Psoas muscle (tissue), 8 donors: ENCODE measurements at regions of chr5 and their contacts with region 1.

Region 1: DNA sequence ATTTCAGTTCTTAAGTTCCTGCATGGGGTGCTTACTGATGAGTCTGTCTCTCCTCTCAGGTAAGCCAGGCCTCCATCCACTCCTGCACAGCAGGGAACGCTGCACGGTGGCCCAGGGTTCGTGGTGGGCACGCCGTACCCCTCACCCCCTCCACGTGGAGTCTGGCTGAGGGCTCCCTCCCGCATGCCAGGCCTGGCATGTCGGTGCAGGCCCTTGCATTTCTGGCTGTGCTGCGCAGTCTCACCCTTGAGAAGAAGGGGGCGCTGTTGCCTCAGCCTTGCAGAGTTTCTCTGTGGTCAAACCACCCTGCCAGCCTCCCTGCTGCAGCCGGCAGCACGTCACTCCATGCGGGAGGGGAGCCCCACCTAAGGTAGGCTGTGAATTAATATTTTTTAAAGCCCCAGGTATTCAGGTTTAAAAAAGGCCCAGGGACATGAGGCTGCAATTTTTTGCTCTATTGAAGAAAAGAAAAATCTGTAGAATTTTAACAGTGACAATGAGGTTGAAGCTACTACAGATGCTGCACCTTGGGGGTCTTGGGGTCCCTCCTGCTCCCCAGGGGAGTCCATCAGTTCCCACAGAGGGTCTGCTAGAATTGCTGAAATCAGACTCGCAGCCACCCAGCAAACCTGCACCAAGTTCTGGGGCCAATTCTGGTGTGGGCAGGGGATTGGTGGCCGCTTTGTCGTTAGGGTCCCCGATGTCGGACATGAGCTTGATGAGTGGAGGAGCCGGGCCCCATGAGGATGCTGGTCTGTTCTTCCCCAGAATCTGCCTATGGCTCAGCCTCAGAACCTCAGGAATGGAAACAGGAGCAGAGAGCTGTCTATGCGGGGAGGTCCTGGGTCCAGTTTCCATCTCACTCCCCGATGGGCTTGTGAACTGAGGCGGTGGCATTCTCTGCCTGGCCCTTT is 52.6 kb downstream of the TENT4A start:
- DNase-seq: peak; percentile 73 to 83
- ATAC-seq: peak; percentile 59 to 83 (median 72)
- H3K4me3 ChIP-seq: peak overlapping the region; percentile 16
- H3K27ac ChIP-seq: peak overlapping the region; percentile 85
- H3K4me1 ChIP-seq: peaks cover 20% of the 10 kb centered on the region
- H3K27me3 ChIP-seq: no peaks in the 10 kb centered on the region
- CTCF ChIP-seq: peak; percentile 73

Region 2: DNA sequence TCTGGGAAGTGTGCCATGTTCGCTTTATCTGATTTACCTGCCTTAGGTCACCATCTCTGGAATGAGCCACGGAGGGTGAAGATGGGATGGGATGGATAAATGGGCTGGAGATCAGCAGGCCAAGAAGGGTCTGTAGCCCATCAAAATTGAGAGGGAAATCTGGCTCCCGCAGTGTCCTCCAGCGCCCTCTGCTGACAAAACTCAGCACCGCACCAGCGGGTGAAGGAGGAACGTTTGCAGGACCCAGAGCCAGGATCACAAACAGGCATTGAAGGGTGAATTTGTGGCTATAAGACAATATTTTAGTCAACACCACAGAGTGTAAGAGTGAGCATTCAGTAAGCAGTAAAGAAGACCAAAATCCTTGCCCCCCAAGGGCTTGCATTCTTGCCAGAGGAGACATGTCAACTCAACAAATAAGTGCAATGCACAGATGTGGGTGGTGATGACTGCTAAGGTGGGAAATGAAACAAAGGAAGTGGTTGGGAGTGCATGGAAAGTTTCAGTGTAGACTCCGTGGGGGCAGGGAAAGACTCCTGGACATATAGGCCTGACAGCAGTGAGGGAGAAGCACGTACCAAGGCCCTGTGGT is 71.7 kb after region 1 on chr5:
- intact Hi-C with region 1: loop called (anchors 5 to 10 kb)
- DNase-seq: no peak
- ATAC-seq: no peak
- H3K4me3 ChIP-seq: no peak overlapping the region
- H3K27ac ChIP-seq: no peak overlapping the region
- H3K4me1 ChIP-seq: peaks cover 11% of the 10 kb centered on the region
- H3K27me3 ChIP-seq: no peaks in the 10 kb centered on the region
- CTCF ChIP-seq: peak; percentile 40

Region 3: DNA sequence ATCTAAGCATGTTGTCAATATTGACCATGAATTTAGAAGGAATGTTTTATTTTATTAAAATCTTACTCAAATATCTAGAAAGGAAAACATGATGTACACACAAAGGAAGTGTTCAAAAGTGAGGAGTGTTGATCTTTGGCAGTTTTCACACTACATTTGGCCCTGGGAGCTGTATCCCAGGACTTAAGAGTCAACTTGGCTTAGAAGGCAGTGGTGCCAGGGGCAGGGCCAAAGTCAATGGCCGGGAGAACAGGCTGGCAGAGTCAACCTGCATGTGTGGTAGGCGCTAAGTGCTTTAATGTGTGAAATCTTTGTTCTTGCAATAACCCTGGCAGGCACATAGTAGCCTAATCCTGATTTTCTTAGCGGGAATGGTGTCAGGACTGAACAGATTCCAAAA is 175.8 kb after region 1 on chr5:
- intact Hi-C with region 1: no loop called
- DNase-seq: no peak
- ATAC-seq: no peak
- H3K4me3 ChIP-seq: no peak overlapping the region
- H3K27ac ChIP-seq: no peak overlapping the region
- H3K4me1 ChIP-seq: no peaks in the 10 kb centered on the region
- H3K27me3 ChIP-seq: no peaks in the 10 kb centered on the region
- CTCF ChIP-seq: no peak